Activated CD8-positive, alpha-beta T cell treated with anti-CD3 and anti-CD28 coated beads for 36 hours (primary cell): ENCODE measurements at regions of chr7 and their contacts with region 1.

Region 1: GRCh38 chr7:909358-910329 is 33.3 kb downstream of the GET4 start:
- DNase-seq: no peak
- ATAC-seq: no peak
- H3K4me3 Mint-ChIP-seq: peak overlapping the region; percentile 41
- H3K27ac Mint-ChIP-seq: no peak overlapping the region
- H3K4me1 Mint-ChIP-seq: peaks cover 14% of the 10 kb centered on the region
- H3K27me3 Mint-ChIP-seq: no peaks in the 10 kb centered on the region
- CTCF ChIP-seq: no peak

Region 2: DNA sequence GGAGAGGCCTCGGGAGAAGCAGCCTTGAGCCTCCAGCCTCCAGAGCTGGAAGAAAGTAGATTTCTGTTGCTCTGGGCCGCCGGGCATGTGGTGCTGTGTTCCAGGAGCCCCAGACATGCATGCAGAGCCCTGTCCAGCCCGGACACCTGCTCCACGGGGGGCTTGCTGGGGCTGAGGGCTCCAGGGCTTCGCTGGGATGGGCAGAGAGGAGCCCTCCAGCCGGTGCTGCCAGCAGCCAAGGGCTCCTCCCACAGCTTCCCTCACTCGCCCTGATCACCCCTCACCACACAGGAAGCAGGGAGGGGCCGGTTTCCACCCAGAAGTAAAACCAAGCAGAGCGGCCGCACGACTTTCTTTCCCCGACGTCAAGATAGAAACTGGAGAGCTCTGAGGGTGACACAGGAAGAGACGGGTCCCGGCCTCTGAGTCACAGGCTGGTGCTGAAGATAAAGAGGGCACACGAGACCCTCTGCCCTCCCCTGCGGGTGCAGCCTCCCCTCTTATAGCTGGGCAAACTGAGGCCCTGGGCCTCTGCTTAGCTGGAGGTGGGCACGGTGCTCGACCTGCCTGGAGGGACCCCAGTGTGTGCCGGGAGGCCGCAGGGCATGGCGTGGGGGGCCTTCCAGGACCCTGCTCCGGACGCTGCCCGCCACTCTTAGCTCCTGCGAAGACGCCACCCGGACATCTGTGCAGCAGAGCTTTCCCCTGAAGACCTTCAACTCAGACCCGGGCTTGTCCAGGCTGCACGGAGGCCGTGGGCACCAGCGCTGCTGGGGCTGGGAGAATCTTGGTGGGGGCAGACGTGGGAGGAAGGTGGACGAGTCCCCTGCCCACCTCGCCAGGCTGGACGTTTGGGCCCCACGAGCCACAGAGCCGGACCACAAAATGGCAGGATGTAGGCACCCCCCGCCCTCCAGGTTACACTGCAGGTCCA is 13.7 kb after region 1 on chr7:
- CTCF ChIA-PET with region 1: interaction called, 10 read pairs
- POLR2A ChIA-PET with region 1: interaction called, 8 read pairs
- intact Hi-C with region 1: no loop called
- DNase-seq: peak; percentile 99
- ATAC-seq: peak; percentile 69
- H3K4me3 Mint-ChIP-seq: peak overlapping the region; percentile 77
- H3K27ac Mint-ChIP-seq: peak overlapping the region; percentile 97
- H3K4me1 Mint-ChIP-seq: peaks cover 58% of the 10 kb centered on the region
- H3K27me3 Mint-ChIP-seq: no peaks in the 10 kb centered on the region
- CTCF ChIP-seq: no peak

Region 3: DNA sequence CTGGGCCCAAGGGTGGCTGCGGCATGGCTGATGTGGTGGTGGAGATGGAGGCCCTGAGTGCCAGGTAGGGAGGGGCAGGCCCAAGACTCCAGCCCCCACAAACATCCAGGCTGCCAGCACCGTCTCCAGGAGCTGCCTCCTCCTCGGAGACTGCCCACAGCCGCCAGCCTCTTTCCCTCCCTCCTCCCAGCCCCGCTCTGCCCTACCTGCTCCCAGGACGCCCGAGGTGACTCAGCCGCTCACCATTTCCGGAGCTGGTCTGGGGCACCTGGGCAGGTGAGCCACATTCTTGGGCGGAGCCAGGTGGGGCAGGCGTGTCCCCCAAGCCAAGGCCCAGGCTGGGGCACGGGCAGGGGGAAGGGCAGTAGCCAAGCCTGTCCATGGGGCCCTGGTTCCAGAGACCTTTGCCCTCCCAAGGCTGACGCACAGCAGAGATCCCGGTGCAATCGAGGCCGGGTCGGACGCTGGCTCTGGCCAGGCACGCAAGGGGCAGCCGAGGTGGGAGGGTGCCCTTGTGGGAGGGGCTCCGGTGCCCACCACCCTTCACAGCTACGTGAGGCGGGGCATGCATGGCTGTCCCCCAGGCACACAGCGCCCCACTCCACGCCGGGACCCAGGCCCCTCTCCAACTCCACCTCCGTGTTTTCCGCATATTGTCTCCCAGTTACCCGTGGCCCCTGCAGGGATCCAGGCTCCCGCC is 36.1 kb after region 1 on chr7:
- CTCF ChIA-PET with region 1: no interaction called
- POLR2A ChIA-PET with region 1: interaction called, 3 read pairs
- intact Hi-C with region 1: loop called (anchors 5 kb)
- DNase-seq: no peak
- ATAC-seq: no peak
- H3K4me3 Mint-ChIP-seq: no peak overlapping the region
- H3K27ac Mint-ChIP-seq: no peak overlapping the region
- H3K4me1 Mint-ChIP-seq: peaks cover 26% of the 10 kb centered on the region
- H3K27me3 Mint-ChIP-seq: no peaks in the 10 kb centered on the region
- CTCF ChIP-seq: no peak

Region 4: DNA sequence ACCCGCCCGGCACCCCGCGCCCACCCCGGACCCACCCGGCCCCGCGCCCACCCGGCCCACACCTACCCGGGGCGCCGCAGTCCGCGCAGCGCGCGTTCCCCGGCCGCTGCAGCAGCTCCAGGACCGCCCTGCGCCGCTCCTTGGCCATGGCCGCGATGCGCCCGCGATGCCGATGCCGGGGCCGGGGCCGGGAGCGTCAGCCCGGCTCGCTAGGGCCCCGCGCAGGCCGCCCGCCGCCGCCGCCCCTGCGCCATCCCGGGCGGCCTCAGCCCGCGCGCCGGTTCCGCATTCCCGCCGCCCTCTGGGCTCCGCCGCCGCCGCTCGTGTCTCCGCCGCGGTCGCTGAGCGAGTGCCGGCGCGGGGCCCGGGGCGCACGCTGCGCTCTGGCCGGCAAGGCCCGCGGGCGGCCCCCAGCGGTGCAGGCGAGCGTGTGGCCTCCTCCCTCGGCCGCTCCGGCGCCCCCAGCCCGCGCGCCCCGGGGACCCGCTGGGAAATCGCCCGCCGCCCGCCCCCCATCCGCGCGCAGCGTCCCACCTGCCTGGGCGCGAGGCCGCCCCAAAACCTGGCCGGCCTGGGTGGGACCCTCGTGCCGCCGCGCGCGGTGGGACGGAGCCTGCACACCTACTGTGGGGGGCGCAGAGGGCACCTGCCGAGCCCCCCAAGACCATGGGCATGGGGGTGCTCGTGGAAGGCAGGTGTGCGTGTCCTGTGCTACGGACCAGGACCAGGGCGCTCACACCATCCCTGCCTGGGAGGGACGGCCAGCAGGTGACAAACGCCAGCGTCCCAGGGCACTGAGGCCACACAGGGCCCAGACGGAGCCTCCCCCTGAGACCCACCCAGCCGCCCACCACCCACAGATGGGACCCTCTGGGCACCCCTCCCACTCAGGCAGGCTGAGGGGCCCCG is 44.9 kb after region 1 on chr7 and contains the start of gene ADAP1:
- CTCF ChIA-PET with region 1: interaction called, 11 read pairs
- POLR2A ChIA-PET with region 1: interaction called, 4 read pairs
- intact Hi-C with region 1: loop called (anchors 5 kb)
- DNase-seq: peak; percentile 65
- ATAC-seq: peak; percentile 85
- H3K4me3 Mint-ChIP-seq: peak within 1 kb of the TSS; percentile 70
- H3K27ac Mint-ChIP-seq: peak within 1 kb of the TSS; percentile 66
- H3K4me1 Mint-ChIP-seq: peaks cover 15% of the 10 kb centered on the region
- H3K27me3 Mint-ChIP-seq: peaks cover 2% of the 10 kb centered on the region
- CTCF ChIP-seq: peak; percentile 33
- total RNA-seq, gene ADAP1: 34.6 to 40.9 TPM

Region 5: GRCh38 chr7:974820-975681 is 65.4 kb after region 1 on chr7 and contains the start of gene COX19:
- CTCF ChIA-PET with region 1: no interaction called
- POLR2A ChIA-PET with region 1: interaction called, 5 read pairs
- intact Hi-C with region 1: loop called (anchors 5 kb)
- DNase-seq: peak; percentile 91
- ATAC-seq: peak; percentile 92
- H3K4me3 Mint-ChIP-seq: peak within 1 kb of the TSS; percentile 96
- H3K27ac Mint-ChIP-seq: peak within 1 kb of the TSS; percentile 93
- H3K4me1 Mint-ChIP-seq: peaks cover 26% of the 10 kb centered on the region
- H3K27me3 Mint-ChIP-seq: no peaks in the 10 kb centered on the region
- CTCF ChIP-seq: no peak
- total RNA-seq, gene COX19: 15.5 to 18.0 TPM